ENCODE measurements at regions of chr5 and their contacts with region 1.

Region 1: DNA sequence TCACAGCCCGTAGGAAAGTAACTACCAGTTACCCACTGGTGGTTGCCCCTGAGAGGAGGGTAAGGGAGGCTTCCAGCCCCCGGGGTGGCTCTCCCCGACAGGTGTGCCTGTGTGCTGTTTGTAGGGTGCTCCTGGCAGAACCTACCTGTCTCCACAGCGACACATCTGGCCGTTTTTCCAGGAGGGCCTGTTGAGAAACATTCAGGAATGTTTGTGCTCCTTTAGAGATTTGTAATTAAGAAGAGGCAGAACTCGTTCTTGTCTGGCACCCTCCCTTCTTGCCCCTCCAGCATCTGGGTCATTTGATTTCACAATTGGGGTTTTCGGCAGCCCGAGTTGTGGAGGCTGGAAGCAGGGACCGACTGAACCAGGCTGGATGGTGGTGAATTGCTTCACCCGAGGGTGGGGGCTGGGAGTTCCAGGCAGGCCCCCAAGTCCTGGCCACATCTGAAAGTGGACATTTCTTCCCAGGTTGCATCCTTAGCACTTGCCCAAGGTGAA is 74.2 kb downstream of the WWC1 start:
- DNase-seq: peak; percentile 86 to 90
- H3K4me3 ChIP-seq: no peak overlapping the region
- H3K4me3 Mint-ChIP-seq: peak overlapping the region; percentile 63
- H3K27ac Mint-ChIP-seq: peak overlapping the region; percentile 97
- H3K4me1 ChIP-seq: peaks cover 61% of the 10 kb centered on the region
- H3K4me1 Mint-ChIP-seq: peaks cover 55% of the 10 kb centered on the region
- H3K27me3 ChIP-seq: no peaks in the 10 kb centered on the region
- H3K27me3 Mint-ChIP-seq: no peaks in the 10 kb centered on the region
- CTCF ChIP-seq: peak; percentile 46 to 84

Region 2: DNA sequence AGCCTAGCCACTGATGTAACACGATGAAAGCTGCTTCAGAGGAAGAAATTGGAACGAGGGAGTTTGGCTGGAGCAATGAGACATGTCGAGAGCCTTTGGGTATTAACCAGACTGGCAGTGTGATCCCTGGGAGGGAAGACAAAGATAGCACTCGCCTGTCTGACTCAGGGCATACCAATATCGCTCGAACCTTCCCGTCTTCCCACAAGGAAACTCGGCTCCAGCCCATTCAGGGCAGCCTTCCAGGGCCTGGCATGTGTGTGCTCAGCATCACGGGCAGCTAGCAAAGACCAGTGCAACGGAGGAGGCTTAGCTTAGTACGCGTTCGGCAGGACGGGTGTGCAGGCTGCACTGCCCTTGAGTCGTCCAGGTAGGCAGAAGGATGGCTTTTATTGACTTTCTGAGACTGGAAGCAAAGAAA is 431.1 kb before region 1 on chr5:
- CTCF ChIA-PET with region 1: no interaction called
- POLR2A ChIA-PET with region 1: no interaction called
- intact Hi-C with region 1: no loop called
- DNase-seq: no peak
- H3K4me3 ChIP-seq: no peak overlapping the region
- H3K4me3 Mint-ChIP-seq: no peak overlapping the region
- H3K27ac Mint-ChIP-seq: no peak overlapping the region
- H3K4me1 ChIP-seq: no peaks in the 10 kb centered on the region
- H3K4me1 Mint-ChIP-seq: peaks cover 7% of the 10 kb centered on the region
- H3K27me3 ChIP-seq: no peaks in the 10 kb centered on the region; the same call in 1 of the 2 replicates
- H3K27me3 Mint-ChIP-seq: peaks cover 35% of the 10 kb centered on the region
- CTCF ChIP-seq: no peak

Region 3: GRCh38 chr5:168152660-168153059 is 213.0 kb before region 1 on chr5:
- CTCF ChIA-PET with region 1: no interaction called
- POLR2A ChIA-PET with region 1: no interaction called
- intact Hi-C with region 1: no loop called
- DNase-seq: no peak
- H3K4me3 ChIP-seq: no peak overlapping the region
- H3K4me3 Mint-ChIP-seq: no peak overlapping the region
- H3K27ac Mint-ChIP-seq: no peak overlapping the region
- H3K4me1 ChIP-seq: no peaks in the 10 kb centered on the region
- H3K4me1 Mint-ChIP-seq: no peaks in the 10 kb centered on the region
- H3K27me3 ChIP-seq: peaks cover 4% of the 10 kb centered on the region
- H3K27me3 Mint-ChIP-seq: peaks cover 39% of the 10 kb centered on the region
- CTCF ChIP-seq: no peak

Region 4: DNA sequence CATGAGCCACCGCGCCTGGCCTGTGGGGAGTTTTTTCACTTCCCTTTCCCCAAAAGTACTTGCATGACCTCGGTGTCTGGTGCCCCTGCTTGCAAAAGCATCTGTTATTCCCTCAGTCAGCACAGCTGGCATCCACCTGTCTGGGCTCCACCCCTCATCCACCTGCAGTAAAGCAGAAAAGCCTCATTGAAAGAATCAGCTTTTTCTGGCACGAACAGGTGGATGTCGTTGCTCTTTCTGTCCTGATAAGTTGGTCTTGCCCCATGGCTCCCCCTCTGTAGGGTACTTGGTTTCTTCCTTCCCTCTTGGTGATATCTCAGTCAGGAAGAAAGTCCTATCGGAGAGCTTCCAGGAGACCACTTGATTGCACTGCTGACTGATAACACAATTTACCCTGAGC is 36.8 kb before region 1 on chr5:
- CTCF ChIA-PET with region 1: interaction called, 4 read pairs
- POLR2A ChIA-PET with region 1: interaction called, 3 read pairs
- intact Hi-C with region 1: loop called (anchors 1 kb)
- DNase-seq: peak; percentile 95 to 96
- H3K4me3 ChIP-seq: no peak overlapping the region
- H3K4me3 Mint-ChIP-seq: peak overlapping the region; percentile 57
- H3K27ac Mint-ChIP-seq: peak overlapping the region; percentile 88
- H3K4me1 ChIP-seq: peaks cover 83% of the 10 kb centered on the region
- H3K4me1 Mint-ChIP-seq: peaks cover 78% of the 10 kb centered on the region
- H3K27me3 ChIP-seq: no peaks in the 10 kb centered on the region
- H3K27me3 Mint-ChIP-seq: no peaks in the 10 kb centered on the region
- CTCF ChIP-seq: no peak

Region 5: DNA sequence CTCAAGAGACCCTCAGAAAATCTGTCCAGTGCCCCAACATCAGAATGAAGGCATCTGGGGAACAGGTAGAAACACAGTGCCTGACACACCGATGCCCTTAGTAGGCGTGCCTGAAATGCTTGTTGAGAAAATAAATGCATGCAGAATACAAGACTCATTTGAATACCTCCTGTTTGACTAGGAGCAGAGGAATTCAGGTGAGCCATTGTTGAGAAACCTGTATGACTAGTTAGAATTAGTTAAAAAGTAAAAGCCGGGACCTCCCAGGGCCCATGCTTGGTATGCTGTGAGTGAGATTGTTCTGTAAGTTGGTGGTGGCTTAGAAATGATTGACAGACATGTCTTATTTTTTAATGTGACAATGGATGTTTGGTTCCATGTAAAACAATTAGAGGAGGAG is 19.2 kb before region 1 on chr5:
- CTCF ChIA-PET with region 1: interaction called, 8 read pairs
- POLR2A ChIA-PET with region 1: no interaction called
- intact Hi-C with region 1: loop called (anchors 1 kb)
- DNase-seq: peak; percentile 79 to 80
- H3K4me3 ChIP-seq: no peak overlapping the region
- H3K4me3 Mint-ChIP-seq: peak overlapping the region; percentile 71
- H3K27ac Mint-ChIP-seq: peak overlapping the region; percentile 92
- H3K4me1 ChIP-seq: peaks cover 81% of the 10 kb centered on the region
- H3K4me1 Mint-ChIP-seq: peaks cover 74% of the 10 kb centered on the region
- H3K27me3 ChIP-seq: no peaks in the 10 kb centered on the region
- H3K27me3 Mint-ChIP-seq: no peaks in the 10 kb centered on the region
- CTCF ChIP-seq: no peak

Region 6: DNA sequence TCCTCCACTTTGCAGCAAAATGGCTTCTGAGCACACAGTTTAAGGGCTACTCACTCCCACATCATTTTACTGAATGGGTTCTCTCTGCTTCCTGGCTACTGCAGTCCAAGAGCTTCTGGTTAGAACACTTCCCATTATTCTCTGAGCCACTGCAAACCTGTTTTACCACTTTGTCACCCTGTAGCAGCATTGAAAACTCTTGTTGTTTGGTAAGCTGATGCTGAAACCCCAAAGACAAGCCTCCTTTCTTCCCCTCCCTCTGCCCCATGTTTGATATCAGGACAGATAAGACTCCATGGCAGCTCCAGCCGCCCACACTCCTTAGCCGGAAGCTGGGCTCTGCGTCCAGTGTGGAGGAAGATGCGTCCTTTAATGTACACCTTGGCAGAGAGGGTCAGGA is 36.3 kb after region 1 on chr5:
- CTCF ChIA-PET with region 1: no interaction called
- POLR2A ChIA-PET with region 1: no interaction called
- intact Hi-C with region 1: loop called (anchors 1 kb)
- DNase-seq: peak in 1 of 2 experiments; percentile 19
- H3K4me3 ChIP-seq: no peak overlapping the region
- H3K4me3 Mint-ChIP-seq: no peak overlapping the region
- H3K27ac Mint-ChIP-seq: no peak overlapping the region
- H3K4me1 ChIP-seq: no peaks in the 10 kb centered on the region
- H3K4me1 Mint-ChIP-seq: peaks cover 27% of the 10 kb centered on the region
- H3K27me3 ChIP-seq: no peaks in the 10 kb centered on the region
- H3K27me3 Mint-ChIP-seq: no peaks in the 10 kb centered on the region
- CTCF ChIP-seq: no peak

Region 7: DNA sequence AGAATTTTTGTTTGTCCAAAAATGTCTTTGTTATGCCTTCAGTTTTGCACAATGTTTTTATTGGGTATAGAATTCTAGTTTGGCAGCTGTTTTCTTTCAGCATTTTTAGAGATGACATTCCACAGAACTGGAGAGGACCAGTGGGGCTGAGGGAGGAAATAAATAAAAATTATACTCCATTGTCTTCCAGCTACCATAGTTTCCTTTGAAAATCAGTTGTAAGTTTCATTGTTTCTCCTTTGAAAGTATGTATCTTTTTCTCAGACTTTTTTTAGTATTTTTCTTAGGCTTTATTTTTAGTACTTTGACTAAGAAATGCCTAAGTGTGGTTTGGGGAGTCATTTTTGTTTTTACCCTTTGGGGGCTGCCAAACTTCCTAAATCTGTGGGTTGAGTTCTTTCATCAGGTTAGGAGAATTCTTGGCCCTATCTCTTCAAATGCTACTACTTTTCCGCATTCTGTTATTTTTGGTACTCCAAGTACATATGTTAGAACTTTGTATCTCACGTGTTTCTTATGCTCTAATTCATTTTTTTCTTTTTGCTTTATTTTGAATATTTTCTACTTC is 148.3 kb after region 1 on chr5:
- CTCF ChIA-PET with region 1: no interaction called
- POLR2A ChIA-PET with region 1: no interaction called
- intact Hi-C with region 1: no loop called
- DNase-seq: no peak
- H3K4me3 ChIP-seq: no peak overlapping the region
- H3K4me3 Mint-ChIP-seq: no peak overlapping the region
- H3K27ac Mint-ChIP-seq: no peak overlapping the region
- H3K4me1 ChIP-seq: no peaks in the 10 kb centered on the region
- H3K4me1 Mint-ChIP-seq: no peaks in the 10 kb centered on the region
- H3K27me3 ChIP-seq: no peaks in the 10 kb centered on the region
- H3K27me3 Mint-ChIP-seq: no peaks in the 10 kb centered on the region
- CTCF ChIP-seq: no peak

Region 8: GRCh38 chr5:168579488-168580226 is 214.0 kb after region 1 on chr5:
- CTCF ChIA-PET with region 1: no interaction called
- POLR2A ChIA-PET with region 1: no interaction called
- intact Hi-C with region 1: no loop called
- DNase-seq: peak; percentile 98 to 99
- H3K4me3 ChIP-seq: peak overlapping the region; percentile 99
- H3K4me3 Mint-ChIP-seq: peak overlapping the region; percentile 92
- H3K27ac Mint-ChIP-seq: peak overlapping the region; percentile 95
- H3K4me1 ChIP-seq: 0 out of 2 replicates have a peak, but pooled peaks cover 4% of the 10 kb centered on the region
- H3K4me1 Mint-ChIP-seq: peaks cover 20% of the 10 kb centered on the region
- H3K27me3 ChIP-seq: no peaks in the 10 kb centered on the region
- H3K27me3 Mint-ChIP-seq: no peaks in the 10 kb centered on the region
- CTCF ChIP-seq: no peak

Measured in Caco-2 (cell line).